ENCODE measurements at regions of chr3 and their contacts with region 1.

Region 1: GRCh38 chr3:172341482-172342059 is 106.7 kb downstream of the GHSR start:
- DNase-seq: peak; percentile 67 to 82 (median 80)
- H3K4me3 ChIP-seq: no peak overlapping the region
- H3K27ac ChIP-seq: no peak overlapping the region
- H3K4me1 ChIP-seq: no peaks in the 10 kb centered on the region
- H3K27me3 ChIP-seq: no peaks in the 10 kb centered on the region

Region 2: GRCh38 chr3:172313671-172314070 is 27.9 kb before region 1 on chr3:
- CTCF ChIA-PET with region 1: no interaction called
- POLR2A ChIA-PET with region 1: no interaction called
- DNase-seq: no peak
- H3K4me3 ChIP-seq: no peak overlapping the region
- H3K27ac ChIP-seq: no peak overlapping the region
- H3K4me1 ChIP-seq: peaks cover 5 to 15% (median 14%) of the 10 kb centered on the region in 4 experiments
- H3K27me3 ChIP-seq: no peaks in the 10 kb centered on the region

Region 3: GRCh38 chr3:172351895-172352466 is 10.4 kb after region 1 on chr3:
- CTCF ChIA-PET with region 1: interaction called, 17 read pairs
- POLR2A ChIA-PET with region 1: no interaction called
- DNase-seq: no peak
- H3K4me3 ChIP-seq: no peak overlapping the region
- H3K27ac ChIP-seq: no peak overlapping the region
- H3K4me1 ChIP-seq: no peaks in the 10 kb centered on the region
- H3K27me3 ChIP-seq: no peaks in the 10 kb centered on the region

Region 4: GRCh38 chr3:172410702-172411477 is 69.3 kb after region 1 on chr3:
- CTCF ChIA-PET with region 1: no interaction called
- POLR2A ChIA-PET with region 1: no interaction called
- DNase-seq: no peak
- H3K4me3 ChIP-seq: no peak overlapping the region
- H3K27ac ChIP-seq: no peak overlapping the region
- H3K4me1 ChIP-seq: no peaks in the 10 kb centered on the region
- H3K27me3 ChIP-seq: peaks cover 0 to 6% (median 0%) of the 10 kb centered on the region in 5 experiments

Region 5: DNA sequence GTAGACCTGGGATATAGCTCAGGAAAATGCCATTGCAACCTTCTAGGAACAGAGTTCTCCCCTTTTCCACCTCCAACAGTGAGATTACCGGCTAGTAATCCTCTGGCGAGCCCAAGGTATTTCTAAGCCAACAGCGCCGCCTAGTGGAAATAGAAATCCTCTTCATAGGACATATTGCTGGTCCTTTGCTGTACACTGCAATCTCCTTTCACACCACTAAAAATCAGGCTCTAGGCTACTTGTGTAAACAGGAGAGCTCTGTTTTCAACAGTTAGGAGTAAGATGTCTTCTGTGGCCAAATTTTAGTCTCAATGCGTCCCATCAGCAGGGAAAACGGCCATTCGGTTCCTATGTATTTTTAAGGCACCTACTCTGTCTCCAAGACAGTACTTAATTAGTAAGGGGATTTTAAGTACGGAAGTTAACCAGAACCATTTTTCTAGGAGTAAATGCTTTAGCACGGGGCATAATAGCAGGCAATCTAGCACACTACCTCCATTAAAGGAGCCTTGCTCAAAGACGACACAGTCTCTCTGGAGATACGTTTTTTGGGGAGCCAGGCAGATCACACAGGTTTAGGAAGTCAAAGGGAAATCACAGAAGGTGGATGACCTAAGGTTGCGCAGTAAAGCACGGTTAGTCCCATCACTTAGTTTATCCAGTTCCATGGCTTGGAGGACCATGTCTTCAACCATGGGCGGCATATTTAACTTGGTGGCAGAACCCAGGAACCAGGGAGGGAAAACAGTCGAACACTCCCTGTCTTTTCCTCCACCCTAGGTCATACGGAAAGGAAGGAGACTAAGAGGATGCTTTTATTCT is 325.5 kb after region 1 on chr3:
- CTCF ChIA-PET with region 1: interaction called, 25 read pairs
- POLR2A ChIA-PET with region 1: no interaction called
- DNase-seq: peak; percentile 72 to 90 (median 88)
- H3K4me3 ChIP-seq: no peak overlapping the region
- H3K27ac ChIP-seq: no peak overlapping the region
- H3K4me1 ChIP-seq: peaks cover 0 to 5% (median 2%) of the 10 kb centered on the region in 4 experiments
- H3K27me3 ChIP-seq: no peaks in the 10 kb centered on the region

Measured in common myeloid progenitor, CD34-positive (primary cell).